GM18951 (cell line): ENCODE measurements at regions of chr1 and their contacts with region 1.

Region 1: GRCh38 chr1:84143796-84144565 is at the start of gene PRKACB:
- POLR2A ChIP-seq: no peak

Region 2: DNA sequence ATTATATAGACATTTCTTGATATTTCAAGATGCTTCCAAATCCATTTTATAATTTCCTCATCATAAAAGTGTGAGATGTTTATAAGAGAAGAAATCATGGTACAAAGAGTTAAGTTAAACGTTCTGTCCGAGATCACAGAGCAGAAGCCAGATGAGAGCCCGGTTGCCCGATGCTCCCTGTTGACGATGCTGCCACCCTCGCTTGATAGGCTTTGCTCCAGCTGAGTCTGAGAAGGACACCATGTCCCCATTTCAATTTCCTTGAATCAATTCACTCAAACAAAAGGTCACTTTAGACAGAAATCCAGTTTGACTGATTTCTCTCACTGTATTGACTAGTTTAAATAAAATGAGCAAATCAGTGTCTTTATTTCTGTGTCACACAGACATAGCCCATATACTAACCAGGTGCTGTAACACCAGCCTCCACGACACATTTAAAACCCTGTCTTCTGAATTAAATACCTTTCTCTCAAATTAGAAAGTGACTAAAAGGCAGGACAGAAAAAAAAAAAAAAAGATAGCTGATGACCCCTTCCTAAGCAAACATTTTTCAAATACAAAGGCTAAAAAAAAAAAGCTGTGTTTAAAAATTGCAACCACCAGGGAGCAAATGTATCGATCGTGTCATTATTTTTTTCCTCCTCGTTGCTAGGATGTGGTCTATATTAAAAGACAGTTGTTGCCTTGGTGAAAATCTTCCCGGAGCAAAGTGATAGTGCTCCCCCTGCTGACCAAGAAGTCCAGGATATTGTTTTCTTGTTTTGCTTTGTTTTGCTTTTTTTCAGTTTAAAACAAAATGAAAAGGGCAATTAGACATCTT is 289.5 kb after region 1 on chr1:
- in situ Hi-C with region 1: loop called (anchors 10 kb)
- POLR2A ChIP-seq: no peak

Region 3: DNA sequence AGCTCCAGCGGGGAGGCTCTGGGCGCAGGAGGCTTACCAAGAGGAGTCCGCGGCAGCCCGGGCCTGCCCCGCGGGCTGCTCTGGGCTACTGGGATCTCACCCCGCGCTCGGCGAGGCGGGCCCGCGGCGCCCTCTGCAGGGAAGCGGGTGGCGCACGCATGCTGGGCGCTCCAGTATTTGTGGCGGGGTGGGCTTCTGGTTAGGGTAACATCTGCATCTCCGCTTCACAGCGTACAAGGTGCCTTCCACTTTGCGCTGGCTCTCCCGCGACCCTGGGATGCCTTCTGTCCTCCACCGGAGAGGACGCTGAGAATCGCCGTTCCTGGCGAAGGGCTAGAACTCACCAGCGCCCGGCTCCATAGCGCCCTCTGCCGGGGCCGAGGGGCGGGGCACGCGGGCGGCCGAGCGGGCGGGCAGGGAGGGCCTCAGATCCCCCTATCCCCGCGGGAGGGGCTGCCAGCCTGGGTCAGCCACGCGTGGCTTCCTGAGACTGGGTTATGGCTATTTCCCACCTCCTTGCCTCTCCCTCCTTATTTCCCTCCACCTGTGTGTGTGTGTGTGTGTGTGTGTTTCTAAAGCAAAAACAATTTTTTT is 476.8 kb after region 1 on chr1:
- in situ Hi-C with region 1: loop called (anchors 25 kb)
- POLR2A ChIP-seq: no peak

Region 4: GRCh38 chr1:84753516-84754385 is 609.8 kb after region 1 on chr1:
- in situ Hi-C with region 1: loop called (anchors 25 kb)
- POLR2A ChIP-seq: no peak